ENCODE measurements at regions of chr5 and their contacts with region 1.

Region 1: GRCh38 chr5:159209438-159210305 is at the start of gene RNF145:
- DNase-seq: peak; percentile 95
- H3K4me3 Mint-ChIP-seq: peak within 1 kb of the TSS; percentile 97
- H3K27ac Mint-ChIP-seq: peak within 1 kb of the TSS; percentile 99
- H3K4me1 Mint-ChIP-seq: peaks cover 42% of the 10 kb centered on the region
- H3K27me3 Mint-ChIP-seq: no peaks in the 10 kb centered on the region
- CTCF ChIP-seq: no peak
- total RNA-seq, gene RNF145: 122 and 157 TPM in 2 replicates

Region 2: GRCh38 chr5:159156426-159157238 is 53.0 kb before region 1 on chr5:
- CTCF ChIA-PET with region 1: interaction called, 24 read pairs
- POLR2A ChIA-PET with region 1: interaction called, 27 read pairs
- intact Hi-C with region 1: loop called (anchors 1 kb)
- DNase-seq: peak; percentile 87
- H3K4me3 Mint-ChIP-seq: no peak overlapping the region
- H3K27ac Mint-ChIP-seq: peak overlapping the region; percentile 28
- H3K4me1 Mint-ChIP-seq: peaks cover 12% of the 10 kb centered on the region
- H3K27me3 Mint-ChIP-seq: no peaks in the 10 kb centered on the region
- CTCF ChIP-seq: peak; percentile 88

Region 3: DNA sequence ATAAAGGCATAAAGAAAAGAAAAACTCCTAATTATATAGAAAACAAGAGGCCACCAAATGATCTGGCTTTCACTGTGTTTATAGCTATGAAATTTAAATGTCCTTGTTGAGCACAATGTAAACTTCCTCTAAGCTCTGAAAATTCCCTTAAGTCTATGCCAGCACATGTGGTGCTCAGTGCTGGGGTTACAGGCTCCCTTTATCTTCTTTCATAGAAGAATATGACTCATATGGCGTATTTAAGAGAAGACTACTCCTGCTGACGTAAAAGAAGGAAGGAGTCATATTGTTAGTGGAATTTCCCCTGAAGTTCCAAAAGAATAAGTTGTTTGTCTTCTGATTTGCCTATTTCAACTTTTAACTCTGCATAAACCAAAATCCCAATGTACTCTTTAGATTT is 30.7 kb before region 1 on chr5:
- CTCF ChIA-PET with region 1: no interaction called
- POLR2A ChIA-PET with region 1: interaction called, 650 read pairs
- intact Hi-C with region 1: loop called (anchors 1 kb)
- DNase-seq: peak; percentile 95
- H3K4me3 Mint-ChIP-seq: peak overlapping the region; percentile 54
- H3K27ac Mint-ChIP-seq: peak overlapping the region; percentile 96
- H3K4me1 Mint-ChIP-seq: peaks cover 77% of the 10 kb centered on the region
- H3K27me3 Mint-ChIP-seq: no peaks in the 10 kb centered on the region
- CTCF ChIP-seq: no peak

Region 4: GRCh38 chr5:159198063-159199036 is 11.3 kb before region 1 on chr5:
- CTCF ChIA-PET with region 1: interaction called, 7 read pairs
- POLR2A ChIA-PET with region 1: interaction called, 650 read pairs
- intact Hi-C with region 1: no loop called
- DNase-seq: no peak
- H3K4me3 Mint-ChIP-seq: no peak overlapping the region
- H3K27ac Mint-ChIP-seq: no peak overlapping the region
- H3K4me1 Mint-ChIP-seq: peaks cover 61% of the 10 kb centered on the region
- H3K27me3 Mint-ChIP-seq: no peaks in the 10 kb centered on the region
- CTCF ChIP-seq: no peak

Region 5: DNA sequence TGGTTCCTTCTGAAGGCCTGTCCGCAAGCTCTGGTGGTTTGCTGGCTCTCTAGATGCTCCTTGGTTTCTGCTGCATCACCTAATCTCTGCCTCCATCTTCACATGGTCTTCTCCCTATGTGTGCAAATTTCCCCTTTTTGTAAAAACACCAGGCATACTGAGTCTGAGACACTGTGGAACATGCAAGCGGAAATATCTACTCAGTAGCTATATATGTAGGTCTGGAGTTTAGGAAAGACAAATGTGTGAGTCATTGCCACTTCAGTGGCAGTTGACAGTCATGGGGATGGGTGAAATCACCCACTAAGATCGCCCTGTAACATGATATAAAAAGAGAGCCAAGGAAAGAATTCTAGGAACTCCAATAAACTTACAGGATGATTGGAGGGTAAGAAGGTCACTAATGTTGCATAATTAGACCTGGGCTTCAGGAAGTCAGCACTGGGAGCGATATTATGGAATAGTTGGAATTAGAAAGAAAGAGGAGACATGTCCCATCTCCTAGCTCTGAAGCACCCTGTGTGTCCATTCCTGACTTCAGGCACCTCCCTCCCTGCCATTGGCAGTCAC is 30.7 kb after region 1 on chr5:
- CTCF ChIA-PET with region 1: interaction called, 3 read pairs
- POLR2A ChIA-PET with region 1: interaction called, 14 read pairs
- intact Hi-C with region 1: no loop called
- DNase-seq: peak; percentile 86
- H3K4me3 Mint-ChIP-seq: no peak overlapping the region
- H3K27ac Mint-ChIP-seq: peak overlapping the region; percentile 36
- H3K4me1 Mint-ChIP-seq: peaks cover 32% of the 10 kb centered on the region
- H3K27me3 Mint-ChIP-seq: no peaks in the 10 kb centered on the region
- CTCF ChIP-seq: no peak

Region 6: GRCh38 chr5:159262859-159263567 is 53.3 kb after region 1 on chr5 and contains the start of gene UBLCP1:
- CTCF ChIA-PET with region 1: interaction called, 8 read pairs
- POLR2A ChIA-PET with region 1: interaction called, 81 read pairs
- intact Hi-C with region 1: loop called (anchors 1 kb)
- DNase-seq: peak; percentile 92
- H3K4me3 Mint-ChIP-seq: peak within 1 kb of the TSS; percentile 83
- H3K27ac Mint-ChIP-seq: peak within 1 kb of the TSS; percentile 97
- H3K4me1 Mint-ChIP-seq: peaks cover 24% of the 10 kb centered on the region
- H3K27me3 Mint-ChIP-seq: no peaks in the 10 kb centered on the region
- CTCF ChIP-seq: no peak
- total RNA-seq, gene UBLCP1: 74.4 and 89.6 TPM in 2 replicates

Region 7: GRCh38 chr5:159286420-159287035 is 76.9 kb after region 1 on chr5:
- CTCF ChIA-PET with region 1: interaction called, 3 read pairs
- POLR2A ChIA-PET with region 1: interaction called, 10 read pairs
- intact Hi-C with region 1: no loop called
- DNase-seq: peak; percentile 62
- H3K4me3 Mint-ChIP-seq: no peak overlapping the region
- H3K27ac Mint-ChIP-seq: no peak overlapping the region
- H3K4me1 Mint-ChIP-seq: no peaks in the 10 kb centered on the region
- H3K27me3 Mint-ChIP-seq: no peaks in the 10 kb centered on the region
- CTCF ChIP-seq: peak; percentile 67

Region 8: DNA sequence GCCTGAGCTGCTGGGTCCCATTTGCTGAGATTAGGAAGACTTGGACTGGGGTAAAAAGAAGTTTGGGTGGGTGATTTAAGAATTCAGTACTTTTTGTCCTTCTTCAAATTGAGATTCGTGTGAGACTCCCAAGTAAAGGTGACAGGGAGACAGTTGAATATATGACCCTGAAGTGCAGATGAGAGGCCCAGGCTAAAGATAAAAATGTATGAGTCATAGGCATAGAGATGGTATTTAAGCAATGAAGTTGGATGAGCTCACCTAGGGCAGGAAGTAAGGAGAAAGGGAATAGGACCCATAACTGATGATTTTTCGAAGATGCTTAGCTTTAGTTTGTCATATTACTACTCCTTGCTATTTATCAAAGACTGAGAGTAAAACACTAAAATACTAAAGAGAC is 450.7 kb after region 1 on chr5:
- CTCF ChIA-PET with region 1: no interaction called
- POLR2A ChIA-PET with region 1: no interaction called
- intact Hi-C with region 1: no loop called
- DNase-seq: peak; percentile 53
- H3K4me3 Mint-ChIP-seq: no peak overlapping the region
- H3K27ac Mint-ChIP-seq: no peak overlapping the region
- H3K4me1 Mint-ChIP-seq: peaks cover 12% of the 10 kb centered on the region
- H3K27me3 Mint-ChIP-seq: no peaks in the 10 kb centered on the region
- CTCF ChIP-seq: no peak